ENCODE measurements at regions of chr7 and their contacts with region 1.

Region 1: DNA sequence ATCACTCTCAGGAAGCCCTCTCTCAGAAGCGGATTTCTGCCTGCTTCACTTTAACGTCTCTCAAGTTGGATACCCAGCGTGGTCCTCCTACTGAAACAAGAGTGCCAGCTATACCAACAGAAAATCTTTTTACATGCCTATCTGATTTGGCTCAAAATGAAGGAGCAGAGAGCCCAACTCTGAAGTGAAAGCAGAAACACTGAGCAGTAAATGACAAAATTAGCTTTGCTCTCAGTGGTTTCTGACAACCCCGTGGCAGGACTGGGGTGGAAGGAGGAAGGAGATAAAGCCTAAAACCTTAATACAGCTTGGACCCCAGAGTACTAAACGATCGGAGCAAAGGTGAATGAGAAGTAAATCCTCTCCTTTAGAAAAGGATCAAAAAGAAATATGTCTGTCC is 25.1 kb upstream of the GPR37 start:
- DNase-seq: no peak
- H3K4me3 ChIP-seq: no peak overlapping the region
- H3K27ac ChIP-seq: no peak overlapping the region
- H3K4me1 ChIP-seq: peaks cover 16% of the 10 kb centered on the region; the same call in 1 of the 2 replicates
- H3K27me3 ChIP-seq: no peaks in the 10 kb centered on the region
- CTCF ChIP-seq: no peak

Region 2: DNA sequence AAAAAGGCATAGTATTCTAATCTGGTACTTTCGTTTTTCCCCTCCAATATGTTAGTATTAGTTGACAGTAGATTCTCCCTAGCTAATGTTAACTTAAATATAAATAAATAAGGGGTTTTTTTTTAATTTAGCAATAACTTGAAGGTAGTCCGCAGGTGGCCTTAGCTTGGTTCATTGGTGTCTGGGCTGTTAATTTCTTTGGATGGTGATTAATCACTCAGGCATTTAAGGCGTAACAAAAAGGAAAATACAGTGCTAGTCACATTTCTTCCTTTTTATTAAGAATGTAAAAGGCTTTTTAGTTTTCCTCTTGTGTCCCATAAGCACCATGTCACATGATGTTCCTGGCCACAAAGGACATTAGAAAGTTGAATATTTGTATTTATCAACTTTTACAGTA is 300.0 kb after region 1 on chr7:
- CTCF ChIA-PET with region 1: no interaction called
- POLR2A ChIA-PET with region 1: no interaction called
- intact Hi-C with region 1: no loop called
- DNase-seq: peak in 1 of 2 experiments; percentile 3
- H3K4me3 ChIP-seq: no peak overlapping the region
- H3K27ac ChIP-seq: no peak overlapping the region
- H3K4me1 ChIP-seq: no peaks in the 10 kb centered on the region; the same call in 1 of the 2 replicates
- H3K27me3 ChIP-seq: no peaks in the 10 kb centered on the region
- CTCF ChIP-seq: no peak

Region 3: GRCh38 chr7:125495997-125496396 is 705.4 kb after region 1 on chr7:
- CTCF ChIA-PET with region 1: interaction called, 10 read pairs
- POLR2A ChIA-PET with region 1: no interaction called
- intact Hi-C with region 1: no loop called
- DNase-seq: no peak
- H3K4me3 ChIP-seq: no peak overlapping the region
- H3K27ac ChIP-seq: no peak overlapping the region
- H3K4me1 ChIP-seq: no peaks in the 10 kb centered on the region
- H3K27me3 ChIP-seq: no peaks in the 10 kb centered on the region
- CTCF ChIP-seq: no peak